Upper lobe of right lung (tissue), 1 donor: ENCODE measurements at regions of chr1 and their contacts with region 1.

Region 1: GRCh38 chr1:66253330-66253921 is 280.5 kb upstream of the SGIP1 start:
- DNase-seq: no peak
- ATAC-seq: peak; percentile 90
- H3K4me3 ChIP-seq: no peak overlapping the region
- H3K27ac ChIP-seq: no peak overlapping the region
- H3K4me1 ChIP-seq: peaks cover 5% of the 10 kb centered on the region
- H3K27me3 ChIP-seq: no peaks in the 10 kb centered on the region
- CTCF ChIP-seq: peak; percentile 82

Region 2: GRCh38 chr1:66112744-66113400 is 140.6 kb before region 1 on chr1:
- intact Hi-C with region 1: no loop called
- DNase-seq: no peak
- ATAC-seq: no peak
- H3K4me3 ChIP-seq: no peak overlapping the region
- H3K27ac ChIP-seq: no peak overlapping the region
- H3K4me1 ChIP-seq: no peaks in the 10 kb centered on the region
- H3K27me3 ChIP-seq: no peaks in the 10 kb centered on the region
- CTCF ChIP-seq: no peak

Region 3: DNA sequence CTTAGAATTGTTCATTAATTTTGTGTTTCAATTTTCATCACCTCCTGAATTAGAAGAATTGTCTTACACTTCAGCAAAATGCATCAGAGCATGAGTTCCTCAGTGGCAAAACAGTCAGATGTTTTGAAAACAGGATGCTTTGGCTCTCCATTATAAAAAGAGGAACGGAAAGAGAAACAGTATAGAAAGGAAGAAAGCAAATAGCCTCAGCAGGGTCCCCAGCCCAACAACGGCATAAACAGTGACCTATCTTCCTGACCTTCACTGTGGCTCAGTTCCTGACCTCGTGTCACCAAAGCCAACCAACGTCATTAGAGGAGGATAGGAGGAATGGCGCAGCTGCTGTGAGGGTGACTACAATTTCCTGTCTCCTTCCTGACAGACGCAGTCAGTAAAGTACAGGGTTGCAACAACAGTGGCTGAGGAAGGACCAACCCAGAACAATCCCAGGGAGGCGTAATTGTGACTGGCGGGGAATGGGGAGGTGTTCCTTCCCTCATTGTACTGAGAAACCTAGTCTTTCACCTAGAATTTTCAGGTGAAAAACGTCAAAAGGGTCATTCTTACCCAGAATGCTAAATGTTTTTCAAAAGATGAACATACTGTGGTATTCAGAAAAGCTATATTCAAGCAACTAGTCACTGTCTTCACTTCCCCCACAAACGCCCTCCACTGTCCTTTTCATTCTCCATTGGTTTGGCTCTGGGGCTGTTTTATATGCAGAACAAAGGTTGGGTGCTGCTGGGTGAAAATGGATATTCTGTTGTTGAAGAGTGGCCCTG is 82.6 kb after region 1 on chr1:
- intact Hi-C with region 1: no loop called
- DNase-seq: peak; percentile 64
- ATAC-seq: peak; percentile 84
- H3K4me3 ChIP-seq: peak overlapping the region; percentile 63
- H3K27ac ChIP-seq: peak overlapping the region; percentile 82
- H3K4me1 ChIP-seq: peaks cover 27% of the 10 kb centered on the region
- H3K27me3 ChIP-seq: no peaks in the 10 kb centered on the region
- CTCF ChIP-seq: no peak

Region 4: GRCh38 chr1:66446261-66447001 is 193.0 kb after region 1 on chr1:
- intact Hi-C with region 1: loop called (anchors 5 kb)
- DNase-seq: no peak
- ATAC-seq: peak; percentile 91
- H3K4me3 ChIP-seq: no peak overlapping the region
- H3K27ac ChIP-seq: peak overlapping the region; percentile 53
- H3K4me1 ChIP-seq: peaks cover 21% of the 10 kb centered on the region
- H3K27me3 ChIP-seq: no peaks in the 10 kb centered on the region
- CTCF ChIP-seq: peak; percentile 88